ENCODE measurements at regions of chr5 and their contacts with region 1.

Region 1: DNA sequence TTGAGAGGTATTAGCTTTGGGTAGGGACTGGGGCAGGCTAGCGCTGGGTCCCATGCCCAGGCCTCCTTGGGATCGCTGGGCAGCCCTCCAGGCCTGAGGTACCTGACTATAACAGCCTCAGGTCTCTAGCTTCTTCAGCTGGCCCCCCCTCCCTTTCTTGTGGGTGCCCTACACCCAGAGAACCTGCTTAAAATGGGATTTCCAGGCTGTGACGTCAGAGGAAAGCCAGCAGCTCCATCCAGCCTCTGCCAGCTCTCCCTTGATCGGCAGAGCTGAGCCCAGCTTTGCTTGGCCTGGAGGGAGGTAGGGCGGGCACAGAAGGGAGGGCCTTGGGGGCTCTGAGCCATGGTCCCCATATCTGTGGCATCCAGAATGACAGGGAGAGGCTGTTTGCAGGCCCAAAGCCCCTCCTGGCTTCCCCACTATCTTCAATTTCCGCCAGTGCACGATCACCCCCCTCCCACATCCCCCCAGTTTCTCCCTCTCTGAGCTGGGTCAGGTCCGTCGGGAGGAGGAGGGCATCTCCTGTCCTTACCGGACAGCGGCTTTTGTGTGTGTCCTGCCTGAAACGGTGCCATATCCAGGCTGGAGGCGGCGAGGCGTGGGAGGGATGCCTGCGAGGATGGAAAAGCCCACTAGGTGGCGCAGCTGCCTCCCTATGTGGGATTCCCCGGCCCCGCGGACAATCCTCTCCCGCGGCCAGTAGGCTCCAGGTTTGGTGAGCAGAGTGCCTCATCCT is 10.8 kb downstream of the REEP2 start:
- DNase-seq: peak; percentile 52
- ATAC-seq: peak; percentile 97
- H3K4me3 ChIP-seq: peak overlapping the region; percentile 13 to 22; a peak in 2 of 4 replicates
- H3K27ac ChIP-seq: no peak overlapping the region
- H3K4me1 ChIP-seq: peaks cover 10 to 17% of the 10 kb centered on the region in 2 experiments
- H3K27me3 ChIP-seq: no peaks in the 10 kb centered on the region
- CTCF ChIP-seq: peak; percentile 91 to 96 (median 96)
- POLR2A ChIP-seq: no peak
- RAD21 ChIP-seq: peak; percentile 94

Region 2: DNA sequence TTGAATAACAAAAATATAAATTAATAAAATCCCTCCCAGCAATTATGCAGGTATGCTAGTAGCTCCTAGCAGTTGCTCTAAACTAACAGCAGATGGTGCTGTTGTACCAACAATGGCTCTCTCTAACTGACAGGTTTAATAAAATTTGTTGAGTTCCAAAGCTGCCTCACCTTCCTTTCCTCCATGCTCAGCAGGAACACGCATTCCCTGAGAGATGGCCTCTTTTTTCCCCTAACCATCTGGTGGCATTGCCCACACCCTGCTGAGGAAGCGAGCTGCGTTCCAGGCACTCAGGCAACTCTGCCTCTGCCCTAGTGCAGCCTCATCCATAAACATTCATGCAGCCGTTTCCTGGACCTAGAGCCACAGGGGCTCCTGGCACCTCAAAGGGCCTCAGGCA is 820.0 kb before region 1 on chr5:
- CTCF ChIA-PET with region 1: no interaction called
- POLR2A ChIA-PET with region 1: no interaction called
- RAD21 ChIA-PET with region 1: no interaction called
- intact Hi-C with region 1: loop called (anchors 5 kb)
- DNase-seq: peak; percentile 51
- ATAC-seq: peak; percentile 95
- H3K4me3 ChIP-seq: no peak overlapping the region
- H3K27ac ChIP-seq: no peak overlapping the region
- H3K4me1 ChIP-seq: peaks cover 0 to 2% of the 10 kb centered on the region in 2 experiments; a peak in 1 of 4 replicates
- H3K27me3 ChIP-seq: no peaks in the 10 kb centered on the region
- CTCF ChIP-seq: peak; percentile 77 to 87 (median 85)
- POLR2A ChIP-seq: no peak
- RAD21 ChIP-seq: peak; percentile 97

Region 3: DNA sequence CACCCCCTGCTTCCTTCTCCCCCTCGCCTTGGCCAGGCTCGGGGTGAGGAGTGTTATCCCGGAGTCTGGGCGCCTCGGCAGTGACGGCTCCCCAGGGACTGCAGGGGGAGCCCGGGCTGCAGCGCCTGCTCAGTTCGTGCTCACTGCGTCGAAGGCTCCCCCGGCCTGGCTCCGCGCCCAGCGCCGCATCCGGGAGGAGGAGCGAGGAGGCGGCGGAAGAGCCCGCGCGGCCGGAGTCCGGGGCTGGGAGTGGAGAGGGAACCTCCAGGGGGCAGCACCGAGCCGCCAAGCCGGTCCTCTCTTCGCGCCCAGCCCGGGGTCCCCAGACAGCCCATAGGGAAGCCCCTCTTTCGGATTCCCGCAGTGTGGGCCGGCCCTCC is 14.3 kb after region 1 on chr5:
- CTCF ChIA-PET with region 1: interaction called, 11 read pairs
- POLR2A ChIA-PET with region 1: interaction called, 4 read pairs
- RAD21 ChIA-PET with region 1: no interaction called
- intact Hi-C with region 1: no loop called
- DNase-seq: peak; percentile 81
- ATAC-seq: peak; percentile 52
- H3K4me3 ChIP-seq: peak overlapping the region; percentile 53 to 82
- H3K27ac ChIP-seq: peak overlapping the region; percentile 88
- H3K4me1 ChIP-seq: peaks cover 0 to 40% of the 10 kb centered on the region in 2 experiments; a peak in 3 of 4 replicates
- H3K27me3 ChIP-seq: no peaks in the 10 kb centered on the region
- CTCF ChIP-seq: peak in 2 of 3 experiments; percentile 77 to 83; a peak in 4 of 6 replicates
- POLR2A ChIP-seq: peak; percentile 33
- RAD21 ChIP-seq: no peak

Region 4: GRCh38 chr5:138503487-138504270 is 54.0 kb after region 1 on chr5:
- CTCF ChIA-PET with region 1: interaction called, 51 read pairs
- POLR2A ChIA-PET with region 1: interaction called, 4 read pairs
- RAD21 ChIA-PET with region 1: interaction called, 4 to 7 read pairs
- intact Hi-C with region 1: loop called (anchors 1 kb)
- DNase-seq: peak; percentile 34
- ATAC-seq: peak; percentile 82
- H3K4me3 ChIP-seq: no peak overlapping the region
- H3K27ac ChIP-seq: no peak overlapping the region
- H3K4me1 ChIP-seq: no peaks in the 10 kb centered on the region
- H3K27me3 ChIP-seq: no peaks in the 10 kb centered on the region
- CTCF ChIP-seq: peak; percentile 72 to 78 (median 76)
- POLR2A ChIP-seq: no peak
- RAD21 ChIP-seq: peak; percentile 89

Region 5: GRCh38 chr5:138549414-138549813 is 99.7 kb after region 1 on chr5:
- CTCF ChIA-PET with region 1: interaction called, 3 read pairs
- POLR2A ChIA-PET with region 1: no interaction called
- RAD21 ChIA-PET with region 1: no interaction called
- intact Hi-C with region 1: loop called (anchors 2 kb)
- DNase-seq: no peak
- ATAC-seq: no peak
- H3K4me3 ChIP-seq: no peak overlapping the region
- H3K27ac ChIP-seq: no peak overlapping the region
- H3K4me1 ChIP-seq: peaks cover 7 to 14% of the 10 kb centered on the region in 2 experiments; a peak in 3 of 4 replicates
- H3K27me3 ChIP-seq: no peaks in the 10 kb centered on the region
- CTCF ChIP-seq: no peak
- POLR2A ChIP-seq: no peak
- RAD21 ChIP-seq: no peak

Region 6: DNA sequence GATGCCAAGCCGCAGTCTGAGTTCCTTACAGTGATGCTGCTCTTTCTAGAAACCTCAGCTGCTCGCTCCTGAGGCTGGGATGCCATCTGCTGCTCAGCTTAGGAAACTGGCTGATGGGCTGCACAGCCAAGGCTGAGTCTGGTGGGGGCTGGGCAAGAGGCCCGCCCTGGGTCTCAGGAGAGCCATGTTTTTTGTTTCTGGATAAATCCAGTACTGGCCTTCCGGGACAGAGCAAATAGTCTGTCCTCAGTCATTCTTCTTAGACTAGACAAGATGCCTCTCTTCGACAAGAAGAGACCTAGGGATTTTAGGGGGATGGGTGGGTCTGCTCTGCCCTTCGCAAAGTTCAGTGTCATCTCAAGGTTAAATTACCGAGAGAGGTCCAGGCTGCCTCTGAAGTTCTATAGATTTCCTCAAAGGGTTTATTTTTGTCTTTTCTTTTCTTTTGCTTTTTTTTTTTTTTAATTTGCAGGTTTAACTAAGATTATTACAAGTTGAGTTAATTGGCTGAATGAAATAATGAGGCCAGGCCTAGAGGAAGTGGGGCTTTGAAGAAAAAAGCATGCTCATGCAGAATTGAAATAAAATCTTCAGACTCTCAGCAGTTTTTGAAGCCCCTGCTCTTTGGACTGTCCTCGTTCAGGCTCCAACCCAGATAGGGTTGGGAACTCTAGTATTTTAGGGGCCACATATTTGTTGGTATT is 813.2 kb after region 1 on chr5:
- CTCF ChIA-PET with region 1: no interaction called
- POLR2A ChIA-PET with region 1: no interaction called
- RAD21 ChIA-PET with region 1: no interaction called
- intact Hi-C with region 1: loop called (anchors 10 kb)
- DNase-seq: peak; percentile 83
- ATAC-seq: peak; percentile 99
- H3K4me3 ChIP-seq: no peak overlapping the region
- H3K27ac ChIP-seq: no peak overlapping the region
- H3K4me1 ChIP-seq: peaks cover 0 to 11% of the 10 kb centered on the region in 2 experiments; a peak in 3 of 4 replicates
- H3K27me3 ChIP-seq: no peaks in the 10 kb centered on the region
- CTCF ChIP-seq: peak; percentile 85 to 94 (median 86)
- POLR2A ChIP-seq: no peak
- RAD21 ChIP-seq: peak; percentile 99

Measured in HCT116 (cell line).